CD4-positive, alpha-beta T cell (primary cell): ENCODE measurements at regions of chr20 and their contacts with region 1.

Region 1: DNA sequence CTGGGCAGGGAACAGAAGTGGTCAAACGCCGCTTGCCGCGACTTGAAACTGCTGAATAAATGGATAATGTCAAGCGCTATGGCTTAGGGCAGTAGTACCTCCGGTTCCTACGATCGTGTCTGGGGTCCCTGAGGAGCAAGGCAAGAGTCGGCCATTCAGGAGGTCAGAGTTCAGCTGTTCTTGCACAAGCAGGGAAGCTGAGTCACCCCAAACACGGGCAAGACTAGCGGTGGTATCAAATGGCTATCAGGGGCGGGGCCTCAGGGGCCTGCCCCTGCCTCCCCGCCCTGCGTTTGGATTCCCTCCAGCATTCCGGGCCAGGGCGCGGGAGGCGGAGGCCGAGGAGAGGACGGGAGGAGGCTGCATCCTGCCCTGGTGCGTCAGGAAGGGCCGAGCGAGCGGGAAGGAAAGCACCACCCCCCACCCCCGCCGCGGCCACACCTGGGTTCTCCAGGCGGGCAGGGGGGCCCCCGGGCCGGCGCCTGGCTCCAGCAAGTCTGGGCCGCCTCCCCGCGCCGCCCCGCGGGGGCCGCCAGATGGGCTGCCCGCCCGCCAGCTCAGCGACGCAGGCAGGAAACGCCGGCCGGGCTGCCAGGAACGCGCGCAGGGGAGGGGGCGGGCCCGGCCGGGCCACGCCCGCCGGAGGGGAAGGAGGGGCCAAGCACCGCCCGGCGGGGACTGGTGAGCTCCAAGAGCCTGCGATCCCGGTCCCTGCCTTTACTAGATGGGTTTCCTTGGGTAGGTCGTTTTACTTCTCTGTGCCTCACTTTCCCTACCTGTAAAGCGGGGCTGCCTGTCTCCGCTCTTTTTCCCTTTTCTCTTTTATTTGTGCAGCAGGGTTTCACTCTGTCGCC is 32.2 kb upstream of the ID1 start:
- DNase-seq: peak; percentile 75 to 94 (median 85)
- ATAC-seq: peak; percentile 89
- H3K4me3 ChIP-seq: peak overlapping the region; percentile 74
- H3K4me3 Mint-ChIP-seq: peak overlapping the region; percentile 90
- H3K27ac ChIP-seq: peak overlapping the region; percentile 37 to 76
- H3K27ac Mint-ChIP-seq: peak overlapping the region; percentile 89
- H3K4me1 ChIP-seq: peaks cover 20% of the 10 kb centered on the region
- H3K4me1 Mint-ChIP-seq: peaks cover 26% of the 10 kb centered on the region
- H3K27me3 ChIP-seq: no peaks in the 10 kb centered on the region
- H3K27me3 Mint-ChIP-seq: no peaks in the 10 kb centered on the region
- CTCF ChIP-seq: no peak

Region 2: DNA sequence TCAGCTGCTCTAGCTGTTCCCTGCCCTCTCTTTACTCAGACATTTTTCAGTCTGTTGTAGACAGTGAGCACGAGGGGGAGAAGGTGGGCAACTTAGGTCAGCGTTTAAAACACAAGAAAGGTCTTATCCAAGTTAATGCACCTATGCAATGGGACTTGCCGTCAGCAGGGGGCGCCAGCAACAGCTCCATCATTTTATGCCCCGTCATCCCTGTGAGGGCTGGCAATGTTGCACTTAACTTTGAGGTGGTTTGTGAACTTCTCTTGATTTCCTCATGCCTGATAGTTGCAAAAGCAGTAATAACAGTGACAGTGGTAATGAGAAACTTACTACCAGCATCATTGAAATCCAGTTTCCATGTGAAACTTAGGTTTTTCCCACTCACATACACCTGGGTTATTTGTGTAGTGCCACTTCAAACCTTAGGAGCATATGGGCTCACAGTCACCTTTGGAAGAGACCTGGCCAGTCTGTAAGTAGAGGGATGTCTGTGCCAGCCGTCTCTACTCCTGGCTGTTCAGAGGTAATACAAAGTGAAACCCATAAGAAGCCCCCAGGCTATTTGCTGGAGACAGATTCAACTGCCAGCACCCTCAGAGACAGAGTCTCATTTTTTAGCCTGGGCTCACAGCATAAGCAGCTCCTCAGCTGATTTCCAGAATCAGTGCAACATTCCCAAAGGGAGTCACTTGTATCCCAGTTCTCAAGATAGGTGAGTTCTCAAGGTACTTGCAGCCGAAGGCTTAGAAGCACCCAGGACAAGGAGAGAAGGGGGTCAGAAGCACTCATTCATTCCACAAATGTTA is 12.6 kb before region 1 on chr20:
- CTCF ChIA-PET with region 1: interaction called, 19 read pairs
- POLR2A ChIA-PET with region 1: interaction called, 6 read pairs
- intact Hi-C with region 1: no loop called
- DNase-seq: peak; percentile 63 to 86 (median 72)
- ATAC-seq: peak; percentile 80
- H3K4me3 ChIP-seq: no peak overlapping the region
- H3K4me3 Mint-ChIP-seq: no peak overlapping the region
- H3K27ac ChIP-seq: no peak overlapping the region
- H3K27ac Mint-ChIP-seq: peak overlapping the region; percentile 49
- H3K4me1 ChIP-seq: peaks cover 14% of the 10 kb centered on the region
- H3K4me1 Mint-ChIP-seq: peaks cover 13% of the 10 kb centered on the region
- H3K27me3 ChIP-seq: no peaks in the 10 kb centered on the region
- H3K27me3 Mint-ChIP-seq: no peaks in the 10 kb centered on the region
- CTCF ChIP-seq: peak; percentile 86

Region 3: DNA sequence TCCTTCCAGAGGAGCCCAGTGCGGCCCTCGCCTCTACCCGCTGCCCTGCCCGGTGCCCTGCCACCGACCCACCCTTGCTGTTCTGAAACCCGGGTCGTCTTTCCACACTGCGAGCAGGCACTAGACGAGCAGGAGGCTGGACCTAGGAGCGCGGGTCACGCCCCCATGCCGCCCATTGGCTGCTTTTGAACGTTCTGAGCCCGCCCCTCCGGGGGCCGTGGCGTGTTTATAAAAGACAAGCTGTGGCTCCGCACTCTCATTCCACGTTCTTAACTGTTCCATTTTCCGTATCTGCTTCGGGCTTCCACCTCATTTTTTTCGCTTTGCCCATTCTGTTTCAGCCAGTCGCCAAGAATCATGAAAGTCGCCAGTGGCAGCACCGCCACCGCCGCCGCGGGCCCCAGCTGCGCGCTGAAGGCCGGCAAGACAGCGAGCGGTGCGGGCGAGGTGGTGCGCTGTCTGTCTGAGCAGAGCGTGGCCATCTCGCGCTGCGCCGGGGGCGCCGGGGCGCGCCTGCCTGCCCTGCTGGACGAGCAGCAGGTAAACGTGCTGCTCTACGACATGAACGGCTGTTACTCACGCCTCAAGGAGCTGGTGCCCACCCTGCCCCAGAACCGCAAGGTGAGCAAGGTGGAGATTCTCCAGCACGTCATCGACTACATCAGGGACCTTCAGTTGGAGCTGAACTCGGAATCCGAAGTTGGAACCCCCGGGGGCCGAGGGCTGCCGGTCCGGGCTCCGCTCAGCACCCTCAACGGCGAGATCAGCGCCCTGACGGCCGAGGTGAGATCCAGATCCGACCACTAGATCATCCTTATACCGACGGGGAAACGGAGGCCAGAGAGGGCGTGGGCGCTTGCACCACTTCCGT is 32.3 kb after region 1 on chr20 and contains the start of gene ID1:
- CTCF ChIA-PET with region 1: interaction called, 347 read pairs
- POLR2A ChIA-PET with region 1: interaction called, 57 read pairs
- intact Hi-C with region 1: loop called in 1 of 2 experiments (anchors 1 kb)
- DNase-seq: peak; percentile 75 to 94 (median 86)
- ATAC-seq: peak; percentile 93
- H3K4me3 ChIP-seq: peak within 1 kb of the TSS; percentile 68
- H3K4me3 Mint-ChIP-seq: peak within 1 kb of the TSS; percentile 94
- H3K27ac ChIP-seq: no peak within 1 kb of the TSS
- H3K27ac Mint-ChIP-seq: peak within 1 kb of the TSS; percentile 74
- H3K4me1 ChIP-seq: peaks cover 33% of the 10 kb centered on the region
- H3K4me1 Mint-ChIP-seq: peaks cover 25% of the 10 kb centered on the region
- H3K27me3 ChIP-seq: peaks cover 38 to 43% of the 10 kb centered on the region in 2 experiments
- H3K27me3 Mint-ChIP-seq: peaks cover 63% of the 10 kb centered on the region
- CTCF ChIP-seq: no peak
- total RNA-seq, gene ID1: 22.8 to 24.2 TPM

Region 4: GRCh38 chr20:32052090-32052777 is 479.3 kb after region 1 on chr20 and contains the start of gene HCK:
- CTCF ChIA-PET with region 1: no interaction called
- POLR2A ChIA-PET with region 1: no interaction called
- intact Hi-C with region 1: no loop called
- DNase-seq: peak in 3 of 14 experiments; percentile 5 to 53 (median 44)
- ATAC-seq: peak; percentile 44
- H3K4me3 ChIP-seq: peak within 1 kb of the TSS; percentile 43
- H3K4me3 Mint-ChIP-seq: peak within 1 kb of the TSS; percentile 69
- H3K27ac ChIP-seq: no peak within 1 kb of the TSS
- H3K27ac Mint-ChIP-seq: no peak within 1 kb of the TSS
- H3K4me1 ChIP-seq: peaks cover 22% of the 10 kb centered on the region
- H3K4me1 Mint-ChIP-seq: peaks cover 16% of the 10 kb centered on the region
- H3K27me3 ChIP-seq: peaks cover 39 to 59% of the 10 kb centered on the region in 2 experiments
- H3K27me3 Mint-ChIP-seq: peaks cover 83% of the 10 kb centered on the region
- CTCF ChIP-seq: no peak
- total RNA-seq, gene HCK: 0.67 to 1.0 TPM